Right lobe of liver (tissue), 6 donors: ENCODE measurements at regions of chr1 and their contacts with region 1.

Region 1: DNA sequence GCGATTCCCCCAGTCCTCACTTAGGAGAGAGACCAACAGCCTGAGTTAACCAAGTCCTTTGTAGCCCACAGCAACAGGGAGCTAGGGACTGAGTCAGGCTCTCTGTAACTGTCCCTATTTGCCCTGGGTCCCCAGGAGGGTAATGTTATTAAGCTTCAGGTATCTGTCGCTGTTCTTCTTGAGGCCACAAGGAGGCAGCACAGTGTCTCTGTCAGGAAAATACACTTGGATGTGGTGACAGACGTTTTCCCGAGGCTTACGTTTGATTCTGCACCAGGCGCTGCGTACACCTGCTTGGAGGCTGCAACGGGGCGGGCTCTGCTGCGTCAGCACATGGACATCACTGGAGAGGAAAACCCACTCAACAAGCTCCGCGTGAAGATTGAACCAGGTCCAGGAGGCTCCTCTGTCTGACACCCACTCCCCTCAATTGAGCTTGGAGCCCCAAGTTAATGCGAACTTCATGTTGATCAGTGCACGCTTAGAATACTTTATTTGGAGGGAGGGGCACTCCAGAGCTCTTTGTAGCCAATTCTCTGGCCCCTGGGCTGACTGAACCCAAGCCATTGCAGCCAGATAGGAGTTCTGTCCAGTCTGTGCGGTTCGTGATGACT is 10.7 kb upstream of the ELF3 start:
- DNase-seq: no peak
- ATAC-seq: peak; percentile 81 to 91 (median 88)
- H3K4me3 ChIP-seq: no peak overlapping the region
- H3K27ac ChIP-seq: no peak overlapping the region
- H3K4me1 ChIP-seq: no peaks in the 10 kb centered on the region
- H3K27me3 ChIP-seq: no peaks in the 10 kb centered on the region
- CTCF ChIP-seq: peak; percentile 64 to 72 (median 68)
- POLR2A ChIP-seq: no peak

Region 2: GRCh38 chr1:202069662-202070061 is 69.9 kb after region 1 on chr1:
- intact Hi-C with region 1: no loop called
- DNase-seq: no peak
- ATAC-seq: no peak
- H3K4me3 ChIP-seq: no peak overlapping the region
- H3K27ac ChIP-seq: no peak overlapping the region
- H3K4me1 ChIP-seq: no peaks in the 10 kb centered on the region
- H3K27me3 ChIP-seq: no peaks in the 10 kb centered on the region
- CTCF ChIP-seq: no peak
- POLR2A ChIP-seq: no peak

Region 3: DNA sequence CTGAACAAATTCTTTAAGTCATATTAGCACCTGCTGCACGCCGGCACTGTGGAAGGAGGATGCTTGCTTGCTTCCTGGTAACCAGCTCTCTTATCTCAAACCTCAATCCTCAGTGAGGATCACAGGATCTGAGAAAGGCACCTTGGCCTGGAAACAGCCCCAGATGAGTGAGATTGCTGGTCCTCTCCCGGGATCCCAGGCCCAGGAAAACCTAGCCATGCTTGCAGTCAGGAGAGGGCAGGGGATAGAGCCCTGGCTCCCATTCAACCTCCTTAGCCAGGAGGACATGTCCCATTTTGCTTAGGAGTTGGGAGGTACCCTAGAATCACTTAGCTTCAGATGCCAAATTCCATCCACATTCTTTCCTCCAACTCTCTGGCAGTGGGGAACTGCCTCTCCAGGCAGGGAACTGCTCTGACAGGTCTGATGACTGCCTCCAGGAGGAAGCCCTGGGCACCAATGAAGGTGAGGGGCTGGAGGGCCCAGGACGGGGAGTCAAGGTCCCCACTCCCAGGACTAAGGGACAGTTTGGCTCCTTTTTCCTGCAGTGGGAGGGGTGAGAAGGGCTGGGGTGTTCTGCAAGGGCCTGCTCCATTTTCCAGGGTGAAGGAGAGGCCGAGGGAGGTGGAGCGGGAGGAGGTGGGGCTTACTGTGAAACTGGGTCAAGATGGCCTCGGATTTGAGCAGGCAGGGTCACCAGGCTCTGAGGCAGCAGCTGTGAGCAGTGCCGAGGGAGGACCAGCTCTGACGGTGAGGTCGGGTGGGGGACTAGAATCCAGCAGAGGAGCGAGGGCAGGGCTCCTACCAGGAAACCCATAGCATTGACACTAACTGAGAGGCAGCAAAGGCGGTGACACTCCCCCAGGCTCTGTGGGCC is 132.5 kb after region 1 on chr1:
- intact Hi-C with region 1: loop called in 1 of 2 experiments (anchors 5 kb)
- DNase-seq: no peak
- ATAC-seq: peak in 1 of 4 donors; percentile 4
- H3K4me3 ChIP-seq: no peak overlapping the region
- H3K27ac ChIP-seq: no peak overlapping the region
- H3K4me1 ChIP-seq: peaks cover 0 to 19% (median 7%) of the 10 kb centered on the region in 4 donors
- H3K27me3 ChIP-seq: no peaks in the 10 kb centered on the region
- CTCF ChIP-seq: no peak
- POLR2A ChIP-seq: no peak

Region 4: DNA sequence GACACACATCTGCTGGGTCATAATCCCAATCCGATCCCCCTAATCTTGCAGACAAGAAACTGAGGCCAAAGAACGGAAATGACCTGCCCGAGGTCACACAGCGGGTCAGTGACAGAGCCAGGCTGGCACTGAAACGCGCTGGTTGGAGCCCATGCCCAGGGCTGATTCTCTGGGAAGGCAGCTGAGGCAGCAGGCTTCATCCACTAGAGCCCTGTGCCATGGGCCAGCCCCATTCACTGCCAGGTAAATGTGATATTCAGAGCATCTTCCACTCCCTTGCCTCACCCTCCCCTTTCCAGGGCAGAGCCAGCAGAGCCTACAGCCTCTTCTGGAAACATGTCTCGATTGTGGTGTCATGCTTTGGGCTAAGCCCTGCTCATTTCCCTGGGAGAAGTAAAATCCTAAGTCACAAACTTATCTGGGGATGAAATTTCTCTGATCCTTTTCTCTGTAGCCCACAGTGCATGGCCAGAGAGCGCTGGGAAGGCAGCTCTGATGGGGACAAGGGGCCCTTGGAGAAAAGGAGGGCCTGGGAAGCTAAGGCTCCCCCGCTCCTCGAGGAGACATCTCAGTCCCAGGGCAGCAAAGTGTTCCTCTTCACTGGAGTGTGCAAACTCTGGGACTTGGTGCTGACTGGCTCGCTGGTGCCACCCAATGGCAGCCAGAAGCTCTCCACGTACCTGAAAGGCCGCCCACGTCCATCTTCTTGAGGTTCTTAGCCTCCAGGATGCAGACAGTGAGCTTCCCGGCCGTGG is 600.1 kb after region 1 on chr1:
- intact Hi-C with region 1: no loop called
- DNase-seq: peak in 1 of 3 donors; percentile 58
- ATAC-seq: peak; percentile 73 to 90 (median 84)
- H3K4me3 ChIP-seq: no peak overlapping the region
- H3K27ac ChIP-seq: no peak overlapping the region
- H3K4me1 ChIP-seq: no peaks in the 10 kb centered on the region
- H3K27me3 ChIP-seq: no peaks in the 10 kb centered on the region
- CTCF ChIP-seq: peak; percentile 53 to 67 (median 62)
- POLR2A ChIP-seq: no peak